Natural killer cell (primary cell): ENCODE measurements at regions of chr3 and their contacts with region 1.

Region 1: GRCh38 chr3:185937689-185938463 is at the start of gene TRA2B:
- DNase-seq: peak; percentile 97 to 99
- ATAC-seq: peak; percentile 87 to 96 (median 88)
- H3K4me3 ChIP-seq: peak within 1 kb of the TSS; percentile 100
- H3K4me3 Mint-ChIP-seq: peak within 1 kb of the TSS; percentile 100
- H3K27ac ChIP-seq: peak within 1 kb of the TSS; percentile 100
- H3K27ac Mint-ChIP-seq: peak within 1 kb of the TSS; percentile 100
- H3K4me1 ChIP-seq: peaks cover 5% of the 10 kb centered on the region
- H3K4me1 Mint-ChIP-seq: peaks cover 53% of the 10 kb centered on the region in 2 donors
- H3K27me3 ChIP-seq: no peaks in the 10 kb centered on the region
- H3K27me3 Mint-ChIP-seq: no peaks in the 10 kb centered on the region
- CTCF ChIP-seq: peak; percentile 37
- total RNA-seq, gene TRA2B: 565 to 669 (median 596) TPM

Region 2: DNA sequence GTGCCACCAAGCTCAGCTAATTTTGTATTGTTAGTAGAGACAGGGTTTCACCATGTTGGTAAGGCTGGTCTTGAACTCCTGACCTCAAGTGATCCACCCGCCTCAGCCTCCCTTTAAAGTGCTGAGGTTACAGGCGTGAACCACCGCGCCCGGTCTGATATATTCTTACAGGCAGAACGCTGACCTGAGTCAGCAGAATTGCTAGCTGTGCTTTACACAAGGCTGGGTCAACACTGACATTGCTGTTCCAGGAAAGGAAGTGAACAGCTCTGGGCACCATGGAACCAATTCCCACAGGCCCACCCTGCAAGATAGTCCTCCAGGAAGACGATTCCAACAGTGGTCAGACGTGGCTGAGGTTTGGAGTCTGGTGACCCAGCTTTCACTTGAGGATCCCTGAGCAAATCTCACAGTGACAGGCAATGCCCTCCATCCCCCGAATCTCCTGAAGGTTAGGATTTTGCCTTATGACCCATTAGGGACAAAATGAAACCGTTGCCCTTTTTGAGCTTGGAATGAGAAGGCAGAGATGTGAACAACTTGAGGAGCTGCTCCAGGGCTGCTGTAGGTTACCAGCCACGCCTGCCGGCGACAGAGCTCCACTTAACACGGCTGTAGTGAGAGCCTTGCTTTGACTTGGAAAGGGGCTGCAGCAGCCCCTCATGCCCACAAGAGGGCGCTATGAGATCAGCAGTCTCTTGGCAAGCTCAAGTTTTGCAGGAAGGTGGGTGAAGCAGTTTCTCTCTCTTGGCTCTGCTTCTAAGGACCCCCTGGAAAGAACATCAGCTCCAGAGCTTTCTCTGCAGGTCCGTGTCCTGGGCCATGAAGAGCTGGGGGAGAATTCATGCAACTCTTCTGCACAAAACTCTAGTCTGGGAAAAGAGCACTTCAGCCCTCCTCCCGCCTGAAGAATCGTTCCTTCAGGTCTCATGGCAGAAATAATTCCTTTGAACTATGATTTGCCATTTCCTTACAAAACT is 277.6 kb before region 1 on chr3:
- intact Hi-C with region 1: loop called (anchors 10 kb)
- DNase-seq: peak; percentile 67 to 77
- ATAC-seq: peak; percentile 84 to 90 (median 88)
- H3K4me3 ChIP-seq: no peak overlapping the region
- H3K4me3 Mint-ChIP-seq: peak overlapping the region; percentile 31
- H3K27ac ChIP-seq: no peak overlapping the region
- H3K27ac Mint-ChIP-seq: peak overlapping the region; percentile 21 to 40
- H3K4me1 ChIP-seq: peaks cover 17% of the 10 kb centered on the region
- H3K4me1 Mint-ChIP-seq: peaks cover 20 to 39% of the 10 kb centered on the region in 2 donors
- H3K27me3 ChIP-seq: no peaks in the 10 kb centered on the region
- H3K27me3 Mint-ChIP-seq: peaks cover 9 to 10% of the 10 kb centered on the region in 2 donors
- CTCF ChIP-seq: peak; percentile 95

Region 3: DNA sequence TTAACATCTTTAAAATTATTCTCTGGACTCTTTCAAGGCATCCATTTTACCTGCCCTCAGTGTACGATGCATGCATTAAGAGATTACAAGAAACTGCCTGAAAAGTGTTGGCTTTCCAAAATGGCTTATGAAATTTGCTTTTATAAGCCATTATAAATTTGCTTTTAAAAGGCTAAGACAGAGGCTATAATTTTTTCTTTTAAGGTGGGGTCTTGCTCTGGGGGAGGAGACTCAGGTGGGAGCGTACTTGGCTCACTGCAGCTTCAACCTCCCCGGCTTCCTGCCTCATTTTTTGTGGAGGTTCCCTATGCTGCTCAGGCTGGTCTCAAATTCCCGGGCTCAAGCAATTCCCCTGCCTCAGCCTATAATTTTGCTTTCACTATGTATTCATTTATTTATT is 17.7 kb before region 1 on chr3:
- intact Hi-C with region 1: loop called (anchors 2 kb)
- DNase-seq: no peak
- ATAC-seq: no peak
- H3K4me3 ChIP-seq: no peak overlapping the region
- H3K4me3 Mint-ChIP-seq: peak overlapping the region; percentile 19
- H3K27ac ChIP-seq: no peak overlapping the region
- H3K27ac Mint-ChIP-seq: peak overlapping the region in 1 of 2 donors; percentile 59
- H3K4me1 ChIP-seq: no peaks in the 10 kb centered on the region
- H3K4me1 Mint-ChIP-seq: peaks cover 33 to 39% of the 10 kb centered on the region in 2 donors
- H3K27me3 ChIP-seq: no peaks in the 10 kb centered on the region
- H3K27me3 Mint-ChIP-seq: no peaks in the 10 kb centered on the region
- CTCF ChIP-seq: no peak

Region 4: GRCh38 chr3:186121968-186122367 is 184.1 kb after region 1 on chr3:
- intact Hi-C with region 1: no loop called
- DNase-seq: no peak
- ATAC-seq: no peak
- H3K4me3 ChIP-seq: no peak overlapping the region
- H3K4me3 Mint-ChIP-seq: no peak overlapping the region
- H3K27ac ChIP-seq: no peak overlapping the region
- H3K27ac Mint-ChIP-seq: no peak overlapping the region
- H3K4me1 ChIP-seq: no peaks in the 10 kb centered on the region
- H3K4me1 Mint-ChIP-seq: peaks cover 6 to 8% of the 10 kb centered on the region in 2 donors
- H3K27me3 ChIP-seq: peaks cover 7% of the 10 kb centered on the region
- H3K27me3 Mint-ChIP-seq: peaks cover 34 to 51% of the 10 kb centered on the region in 2 donors
- CTCF ChIP-seq: no peak

Region 5: DNA sequence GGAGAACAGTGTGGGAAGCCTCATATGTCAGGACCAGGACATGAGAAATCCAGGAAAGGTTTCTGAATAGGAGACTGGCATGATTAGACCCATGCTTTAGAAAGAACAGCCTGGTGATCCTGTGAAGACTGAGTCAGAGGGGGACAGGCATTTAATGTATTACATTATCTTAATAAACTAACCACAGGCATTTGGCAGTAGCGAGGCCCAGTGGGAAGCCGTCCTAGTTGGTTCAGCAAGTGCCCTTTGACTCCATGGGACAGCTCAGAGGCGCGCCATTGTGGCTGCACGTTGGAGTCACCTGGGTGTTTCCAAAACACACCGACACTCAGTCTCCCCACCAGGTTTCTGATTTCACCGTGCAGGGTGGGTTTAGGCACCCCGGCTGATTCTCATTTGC is 514.6 kb after region 1 on chr3:
- intact Hi-C with region 1: no loop called
- DNase-seq: no peak
- ATAC-seq: no peak
- H3K4me3 ChIP-seq: no peak overlapping the region
- H3K4me3 Mint-ChIP-seq: no peak overlapping the region
- H3K27ac ChIP-seq: no peak overlapping the region
- H3K27ac Mint-ChIP-seq: no peak overlapping the region
- H3K4me1 ChIP-seq: no peaks in the 10 kb centered on the region
- H3K4me1 Mint-ChIP-seq: no peaks in the 10 kb centered on the region
- H3K27me3 ChIP-seq: no peaks in the 10 kb centered on the region
- H3K27me3 Mint-ChIP-seq: peaks cover 0 to 6% of the 10 kb centered on the region in 2 donors
- CTCF ChIP-seq: no peak

Region 6: GRCh38 chr3:186783073-186783730 is 845.3 kb after region 1 on chr3 and contains the start of gene EIF4A2:
- intact Hi-C with region 1: loop called (anchors 5 kb)
- DNase-seq: peak; percentile 89 to 96
- ATAC-seq: peak; percentile 71 to 85 (median 77)
- H3K4me3 ChIP-seq: peak within 1 kb of the TSS; percentile 79
- H3K4me3 Mint-ChIP-seq: peak within 1 kb of the TSS; percentile 96
- H3K27ac ChIP-seq: peak within 1 kb of the TSS; percentile 93
- H3K27ac Mint-ChIP-seq: peak within 1 kb of the TSS; percentile 95 to 97
- H3K4me1 ChIP-seq: peaks cover 19% of the 10 kb centered on the region
- H3K4me1 Mint-ChIP-seq: peaks cover 57% of the 10 kb centered on the region in 2 donors
- H3K27me3 ChIP-seq: no peaks in the 10 kb centered on the region
- H3K27me3 Mint-ChIP-seq: no peaks in the 10 kb centered on the region
- CTCF ChIP-seq: no peak
- total RNA-seq, gene EIF4A2: 551 to 652 (median 621) TPM